Tibial artery (tissue), 4 donors: ENCODE measurements at regions of chr13 and their contacts with region 1.

Region 1: GRCh38 chr13:77056382-77056781 is 29.4 kb upstream of the FBXL3 start:
- DNase-seq: no peak
- H3K4me3 ChIP-seq: no peak overlapping the region
- H3K27ac ChIP-seq: no peak overlapping the region
- H3K4me1 ChIP-seq: no peaks in the 10 kb centered on the region
- H3K27me3 ChIP-seq: no peaks in the 10 kb centered on the region
- CTCF ChIP-seq: no peak

Region 2: DNA sequence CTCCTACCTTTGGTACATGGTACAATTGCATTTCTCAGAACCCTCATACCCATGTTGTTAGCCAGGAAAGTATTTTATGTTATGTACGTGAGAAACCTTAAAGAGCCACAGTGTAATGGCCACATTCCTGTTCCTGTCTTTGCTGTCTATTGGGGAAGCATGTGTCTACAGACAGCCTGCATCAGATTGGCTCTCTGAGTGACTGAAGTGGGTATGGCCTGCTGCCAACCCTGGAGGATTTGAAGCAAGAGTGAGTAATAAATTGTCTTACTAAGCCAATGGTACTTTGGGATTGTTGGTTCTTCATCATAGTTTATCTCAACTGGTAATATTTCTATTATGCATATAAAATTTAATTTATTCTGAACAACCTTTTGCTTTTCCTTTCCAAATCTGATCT is 846.1 kb before region 1 on chr13:
- intact Hi-C with region 1: no loop called
- DNase-seq: no peak
- H3K4me3 ChIP-seq: no peak overlapping the region
- H3K27ac ChIP-seq: no peak overlapping the region
- H3K4me1 ChIP-seq: no peaks in the 10 kb centered on the region
- H3K27me3 ChIP-seq: no peaks in the 10 kb centered on the region
- CTCF ChIP-seq: no peak

Region 3: DNA sequence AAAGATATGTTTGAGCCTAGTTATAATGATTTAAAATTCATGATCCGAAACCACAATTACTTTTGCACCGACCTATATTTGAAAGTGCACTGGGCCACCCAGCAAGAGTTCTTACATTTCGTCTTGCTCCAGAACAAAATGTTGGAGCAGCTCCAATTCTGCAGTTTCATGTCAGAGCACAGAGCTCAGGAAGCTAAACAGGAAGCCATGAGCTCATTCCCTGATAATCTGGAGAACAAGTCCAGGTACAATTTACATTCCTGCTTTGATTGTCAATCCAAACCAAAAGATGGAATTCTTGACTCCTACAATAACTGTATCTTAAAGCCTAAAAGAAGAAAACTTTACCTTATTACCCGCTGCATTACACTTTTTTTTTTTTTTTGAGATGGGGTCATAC is 302.0 kb before region 1 on chr13:
- intact Hi-C with region 1: no loop called
- DNase-seq: peak in 1 of 2 donors; percentile 21
- H3K4me3 ChIP-seq: no peak overlapping the region
- H3K27ac ChIP-seq: no peak overlapping the region
- H3K4me1 ChIP-seq: no peaks in the 10 kb centered on the region
- H3K27me3 ChIP-seq: no peaks in the 10 kb centered on the region
- CTCF ChIP-seq: no peak

Region 4: DNA sequence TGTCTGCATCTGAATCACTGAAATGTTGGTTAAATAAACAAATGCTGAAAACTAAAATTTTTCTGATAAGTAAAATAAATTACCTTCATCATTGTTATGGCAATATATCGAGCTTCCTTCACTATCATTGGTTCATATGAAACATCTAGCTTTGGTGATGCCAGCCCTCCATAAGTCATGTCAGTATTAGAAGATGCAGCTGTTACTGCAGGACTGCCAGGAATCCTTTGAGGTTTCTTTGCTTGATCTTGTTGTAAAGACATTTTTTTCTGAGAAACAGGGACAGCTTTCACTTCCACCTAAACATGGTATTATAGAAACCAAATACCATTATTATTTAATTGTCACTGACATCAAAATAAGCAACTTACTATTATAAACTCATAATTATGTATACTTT is 94.3 kb after region 1 on chr13:
- intact Hi-C with region 1: no loop called
- DNase-seq: no peak
- H3K4me3 ChIP-seq: no peak overlapping the region
- H3K27ac ChIP-seq: no peak overlapping the region
- H3K4me1 ChIP-seq: no peaks in the 10 kb centered on the region
- H3K27me3 ChIP-seq: no peaks in the 10 kb centered on the region
- CTCF ChIP-seq: no peak

Region 5: DNA sequence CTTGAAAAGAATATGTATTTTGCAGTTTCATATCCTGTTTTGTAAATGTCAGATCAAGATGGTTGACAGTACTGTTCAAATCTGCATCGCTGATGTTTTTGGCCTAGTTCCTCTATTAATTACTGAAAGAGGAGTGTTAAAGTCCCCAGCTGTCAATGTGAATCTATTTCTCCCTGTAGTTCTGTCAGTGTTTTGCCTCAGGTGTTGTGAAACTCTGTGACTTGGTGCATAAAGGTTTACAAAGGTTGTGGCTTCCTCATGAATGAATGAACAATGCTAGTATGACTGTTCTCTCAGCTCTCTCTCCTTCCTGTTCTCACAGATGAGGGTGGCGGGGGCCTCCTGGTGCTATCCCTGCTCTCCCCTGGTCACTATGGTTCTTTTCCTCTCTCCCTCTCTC is 128.1 kb after region 1 on chr13:
- intact Hi-C with region 1: loop called (anchors 10 kb)
- DNase-seq: no peak
- H3K4me3 ChIP-seq: no peak overlapping the region
- H3K27ac ChIP-seq: no peak overlapping the region
- H3K4me1 ChIP-seq: no peaks in the 10 kb centered on the region
- H3K27me3 ChIP-seq: no peaks in the 10 kb centered on the region
- CTCF ChIP-seq: no peak